CD14-positive monocyte (primary cell): ENCODE measurements at regions of chr15 and their contacts with region 1.

Region 1: DNA sequence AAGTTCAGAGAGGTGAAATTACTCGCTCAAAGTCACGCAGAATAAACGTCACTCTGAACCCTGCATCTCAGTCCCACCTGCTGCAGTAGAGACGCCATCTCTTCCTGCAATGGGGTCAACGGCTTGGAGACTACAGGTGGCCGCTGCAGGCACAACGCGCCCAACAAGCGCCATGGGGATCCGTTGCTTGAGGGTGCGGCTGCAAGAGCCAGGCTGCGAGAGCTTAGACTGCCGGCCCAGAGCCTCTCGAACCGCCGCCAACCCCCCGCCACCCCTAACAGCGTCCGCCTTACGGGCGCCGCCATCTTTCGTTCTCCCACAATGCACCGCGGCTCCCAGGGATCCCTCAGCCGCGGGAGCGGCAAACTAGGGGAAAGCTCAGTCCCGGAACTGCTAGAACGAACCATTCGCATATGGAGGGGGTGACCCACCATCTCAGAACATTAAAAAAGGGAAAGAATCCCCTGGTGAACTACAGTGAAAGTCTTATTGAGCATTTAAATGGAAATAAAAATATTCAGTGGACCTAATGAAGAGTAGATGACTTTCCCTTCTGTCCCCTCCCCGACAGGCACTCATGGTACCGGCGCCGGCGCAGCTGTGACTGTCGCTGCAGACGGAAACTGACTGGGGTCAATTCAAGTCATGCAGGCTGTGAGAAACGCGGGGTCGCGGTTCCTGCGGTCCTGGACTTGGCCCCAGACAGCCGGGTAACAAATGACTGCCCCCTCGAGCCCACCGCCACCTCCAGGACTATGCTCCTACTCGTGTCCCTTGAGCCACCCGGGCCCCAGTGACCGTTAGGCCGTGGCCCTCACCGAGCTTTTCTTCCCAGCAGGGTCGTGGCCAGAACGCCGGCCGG is at the starts of genes MRPL46 and MRPS11:
- DNase-seq: peak; percentile 79 to 86 (median 81)
- H3K4me3 ChIP-seq: peak within 1 kb of the TSS; percentile 91 to 95 (median 92)
- H3K4me3 Mint-ChIP-seq: peak within 1 kb of the TSS; percentile 86 to 95
- H3K27ac ChIP-seq: peak within 1 kb of the TSS; percentile 60 to 96
- H3K27ac Mint-ChIP-seq: peak within 1 kb of the TSS; percentile 91 to 99 (median 98)
- H3K4me1 ChIP-seq: peaks cover 15 to 27% of the 10 kb centered on the region in 2 donors
- H3K4me1 Mint-ChIP-seq: peaks cover 20% of the 10 kb centered on the region
- H3K27me3 ChIP-seq: no peaks in the 10 kb centered on the region
- H3K27me3 Mint-ChIP-seq: no peaks in the 10 kb centered on the region
- CTCF ChIP-seq: no peak
- polyA plus RNA-seq, gene MRPL46: 6.3 to 20.3 (median 17.0) TPM
- polyA plus RNA-seq, gene MRPS11: 31.1 to 70.2 (median 65.2) TPM

Region 2: DNA sequence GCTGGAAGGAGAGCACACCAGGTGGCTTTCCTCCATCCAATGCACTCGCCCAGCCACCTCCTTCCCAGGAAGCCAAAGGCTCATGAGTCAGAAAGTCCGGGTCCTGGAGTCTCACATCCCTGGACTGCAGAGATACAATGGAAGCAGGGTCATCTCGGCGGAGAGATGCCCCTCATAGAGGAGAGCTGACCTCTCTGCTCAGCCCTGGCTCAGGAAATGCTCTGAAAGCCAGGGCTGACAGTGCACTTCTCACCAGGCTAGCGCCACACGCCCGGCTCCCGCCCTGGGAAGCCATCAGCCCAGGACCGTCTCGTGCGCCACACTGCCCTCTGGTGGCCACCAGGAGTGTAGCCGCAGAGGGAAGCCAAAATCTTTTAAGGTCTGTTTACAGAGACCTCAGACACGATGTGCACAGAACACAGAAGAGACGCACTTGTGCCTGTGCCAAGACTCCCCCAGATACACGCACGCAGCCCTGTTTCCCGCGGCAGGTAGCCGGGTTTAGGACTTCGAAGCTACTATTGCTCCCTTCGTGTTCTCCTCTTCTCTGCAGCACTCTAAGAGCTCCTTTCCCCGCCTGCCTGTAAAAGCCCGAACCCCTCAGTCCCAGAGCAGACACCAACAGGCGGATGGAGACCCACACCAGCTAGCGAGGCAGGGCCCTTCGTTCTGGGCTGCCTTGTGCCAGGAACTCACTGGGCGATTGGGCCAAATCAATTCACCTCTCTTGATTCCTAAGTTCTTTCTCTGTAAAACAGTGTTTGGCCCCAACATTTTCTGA is 220.4 kb before region 1 on chr15:
- intact Hi-C with region 1: no loop called
- DNase-seq: peak; percentile 28 to 49 (median 41)
- H3K4me3 ChIP-seq: no peak overlapping the region
- H3K4me3 Mint-ChIP-seq: no peak overlapping the region
- H3K27ac ChIP-seq: no peak overlapping the region
- H3K27ac Mint-ChIP-seq: no peak overlapping the region
- H3K4me1 ChIP-seq: peaks cover 0 to 2% of the 10 kb centered on the region in 2 donors
- H3K4me1 Mint-ChIP-seq: peaks cover 5% of the 10 kb centered on the region
- H3K27me3 ChIP-seq: no peaks in the 10 kb centered on the region
- H3K27me3 Mint-ChIP-seq: peaks cover 5 to 11% (median 6%) of the 10 kb centered on the region in 3 donors
- CTCF ChIP-seq: peak; percentile 96

Region 3: DNA sequence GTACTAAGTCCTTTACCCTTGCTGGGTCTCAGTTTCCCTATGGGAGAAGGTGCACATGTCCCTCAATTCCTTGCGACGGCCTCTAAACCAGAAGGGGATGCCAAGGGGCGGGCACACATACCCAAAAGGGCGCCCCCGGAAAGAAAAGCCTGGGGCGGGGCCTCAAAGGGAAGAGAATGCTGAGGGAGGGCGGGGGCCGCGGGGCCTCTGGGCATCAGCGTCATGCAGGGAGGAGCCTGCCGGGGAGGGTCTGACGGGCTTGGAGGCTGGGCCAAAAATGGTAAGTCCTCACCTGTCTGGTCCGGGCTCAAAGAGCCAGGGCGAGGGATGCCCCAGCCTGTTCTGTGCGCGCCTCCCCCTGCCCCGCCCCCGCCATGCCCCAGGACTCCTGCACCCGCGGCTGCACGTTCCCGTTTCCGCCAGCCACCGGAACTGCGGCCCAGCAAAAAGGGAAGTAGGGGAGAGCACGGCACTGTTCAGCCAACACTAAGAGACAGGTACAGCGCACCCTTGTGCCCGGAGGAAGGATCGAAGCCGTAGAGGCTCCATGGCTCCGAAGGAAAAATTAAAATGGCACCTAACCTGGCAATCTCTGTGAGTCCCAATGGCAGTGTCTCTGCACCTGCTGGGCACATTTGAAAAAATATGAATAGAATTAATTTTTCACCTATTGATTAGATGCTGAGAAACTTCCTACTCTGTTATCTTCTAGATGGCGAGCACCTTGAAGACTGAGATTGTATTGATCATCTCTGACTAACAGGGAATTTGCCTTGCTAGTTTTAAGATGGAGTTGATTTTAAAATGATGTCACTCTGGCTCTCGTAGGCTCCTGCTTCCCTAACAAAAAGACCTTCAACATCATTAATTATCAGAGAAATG is 79.2 kb after region 1 on chr15 and contains the start of gene DET1:
- intact Hi-C with region 1: loop called in 1 of 2 experiments (anchors 5 kb)
- DNase-seq: peak; percentile 90 to 94 (median 92)
- H3K4me3 ChIP-seq: peak within 1 kb of the TSS; percentile 71 to 94 (median 93)
- H3K4me3 Mint-ChIP-seq: peak within 1 kb of the TSS; percentile 81 to 90
- H3K27ac ChIP-seq: peak within 1 kb of the TSS; percentile 11 to 83
- H3K27ac Mint-ChIP-seq: peak within 1 kb of the TSS; percentile 66 to 86 (median 81)
- H3K4me1 ChIP-seq: peaks cover 2 to 9% of the 10 kb centered on the region in 2 donors
- H3K4me1 Mint-ChIP-seq: peaks cover 7% of the 10 kb centered on the region
- H3K27me3 ChIP-seq: no peaks in the 10 kb centered on the region
- H3K27me3 Mint-ChIP-seq: peaks cover 0 to 3% (median 0%) of the 10 kb centered on the region in 3 donors
- CTCF ChIP-seq: peak; percentile 73
- polyA plus RNA-seq, gene DET1: 0.88 to 3.4 (median 1.8) TPM

Region 4: GRCh38 chr15:88620995-88621772 is 153.9 kb after region 1 on chr15 and contains the start of gene AEN:
- intact Hi-C with region 1: loop called (anchors 5 kb)
- DNase-seq: peak; percentile 93 to 96 (median 93)
- H3K4me3 ChIP-seq: peak within 1 kb of the TSS; percentile 59 to 90 (median 81)
- H3K4me3 Mint-ChIP-seq: peak within 1 kb of the TSS; percentile 80 to 91
- H3K27ac ChIP-seq: peak within 1 kb of the TSS; percentile 23 to 76
- H3K27ac Mint-ChIP-seq: peak within 1 kb of the TSS; percentile 79 to 96 (median 90)
- H3K4me1 ChIP-seq: peaks cover 29 to 33% of the 10 kb centered on the region in 2 donors
- H3K4me1 Mint-ChIP-seq: peaks cover 33% of the 10 kb centered on the region
- H3K27me3 ChIP-seq: no peaks in the 10 kb centered on the region
- H3K27me3 Mint-ChIP-seq: peaks cover 1 to 5% (median 3%) of the 10 kb centered on the region in 3 donors
- CTCF ChIP-seq: no peak
- polyA plus RNA-seq, gene AEN: 4.6 to 10.7 (median 6.3) TPM

Region 5: DNA sequence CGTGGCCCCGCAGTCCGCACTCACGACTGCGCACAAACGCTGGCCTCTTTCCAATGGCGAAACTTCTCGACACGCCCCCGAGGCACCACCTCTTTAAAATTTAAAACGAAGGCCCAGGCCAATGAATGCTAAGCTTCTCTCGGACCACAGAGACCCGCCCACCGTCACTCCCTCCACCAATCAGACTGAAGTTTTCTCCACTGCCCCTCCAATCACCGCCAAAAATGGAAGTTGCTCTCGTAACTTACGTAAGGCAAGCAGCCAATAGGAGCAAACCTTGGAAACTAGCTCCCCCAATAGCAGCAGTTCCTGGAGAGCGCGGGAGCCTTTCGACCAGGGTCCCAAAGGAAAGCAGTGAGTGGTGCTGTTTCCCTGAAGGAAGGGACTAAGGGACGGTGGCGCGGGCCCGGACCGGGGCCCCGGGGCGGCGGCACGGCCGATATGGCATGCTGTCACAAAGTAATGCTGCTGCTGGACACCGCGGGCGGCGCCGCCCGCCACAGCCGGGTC is 1107.9 kb after region 1 on chr15 and contains the start of gene TICRR:
- intact Hi-C with region 1: loop called in 1 of 2 experiments (anchors 10 kb)
- DNase-seq: peak; percentile 98 to 99 (median 98)
- H3K4me3 ChIP-seq: peak within 1 kb of the TSS; percentile 66 to 97 (median 87)
- H3K4me3 Mint-ChIP-seq: peak within 1 kb of the TSS; percentile 86 to 94
- H3K27ac ChIP-seq: peak within 1 kb of the TSS in 1 of 2 donors; percentile 50
- H3K27ac Mint-ChIP-seq: peak within 1 kb of the TSS in 6 of 7 donors; percentile 35 to 78 (median 58)
- H3K4me1 ChIP-seq: peaks cover 24 to 35% of the 10 kb centered on the region in 2 donors
- H3K4me1 Mint-ChIP-seq: peaks cover 38% of the 10 kb centered on the region
- H3K27me3 ChIP-seq: peaks cover 0 to 5% of the 10 kb centered on the region in 2 donors
- H3K27me3 Mint-ChIP-seq: peaks cover 9 to 21% (median 19%) of the 10 kb centered on the region in 3 donors
- CTCF ChIP-seq: no peak
- polyA plus RNA-seq, gene TICRR: not detected